CD14-positive monocyte (primary cell): ENCODE measurements at regions of chr2 and their contacts with region 1.

Region 1: GRCh38 chr2:197383823-197384222 is 51.0 kb downstream of the SF3B1 start:
- DNase-seq: no peak
- H3K4me3 ChIP-seq: no peak overlapping the region
- H3K4me3 Mint-ChIP-seq: no peak overlapping the region
- H3K27ac ChIP-seq: no peak overlapping the region
- H3K27ac Mint-ChIP-seq: no peak overlapping the region
- H3K4me1 ChIP-seq: no peaks in the 10 kb centered on the region
- H3K4me1 Mint-ChIP-seq: no peaks in the 10 kb centered on the region
- H3K27me3 ChIP-seq: no peaks in the 10 kb centered on the region
- H3K27me3 Mint-ChIP-seq: peaks cover 0 to 3% (median 0%) of the 10 kb centered on the region in 3 donors
- CTCF ChIP-seq: no peak

Region 2: GRCh38 chr2:196750982-196751635 is 632.7 kb before region 1 on chr2:
- intact Hi-C with region 1: loop called in 1 of 2 experiments (anchors 10 kb)
- DNase-seq: peak; percentile 42 to 60 (median 57)
- H3K4me3 ChIP-seq: peak overlapping the region in 1 of 3 experiments; percentile 1
- H3K4me3 Mint-ChIP-seq: no peak overlapping the region
- H3K27ac ChIP-seq: no peak overlapping the region
- H3K27ac Mint-ChIP-seq: peak overlapping the region in 1 of 7 donors; percentile 20
- H3K4me1 ChIP-seq: peaks cover 9 to 12% of the 10 kb centered on the region in 2 donors
- H3K4me1 Mint-ChIP-seq: peaks cover 19% of the 10 kb centered on the region
- H3K27me3 ChIP-seq: no peaks in the 10 kb centered on the region
- H3K27me3 Mint-ChIP-seq: peaks cover 0 to 3% (median 1%) of the 10 kb centered on the region in 3 donors
- CTCF ChIP-seq: peak; percentile 84

Region 3: DNA sequence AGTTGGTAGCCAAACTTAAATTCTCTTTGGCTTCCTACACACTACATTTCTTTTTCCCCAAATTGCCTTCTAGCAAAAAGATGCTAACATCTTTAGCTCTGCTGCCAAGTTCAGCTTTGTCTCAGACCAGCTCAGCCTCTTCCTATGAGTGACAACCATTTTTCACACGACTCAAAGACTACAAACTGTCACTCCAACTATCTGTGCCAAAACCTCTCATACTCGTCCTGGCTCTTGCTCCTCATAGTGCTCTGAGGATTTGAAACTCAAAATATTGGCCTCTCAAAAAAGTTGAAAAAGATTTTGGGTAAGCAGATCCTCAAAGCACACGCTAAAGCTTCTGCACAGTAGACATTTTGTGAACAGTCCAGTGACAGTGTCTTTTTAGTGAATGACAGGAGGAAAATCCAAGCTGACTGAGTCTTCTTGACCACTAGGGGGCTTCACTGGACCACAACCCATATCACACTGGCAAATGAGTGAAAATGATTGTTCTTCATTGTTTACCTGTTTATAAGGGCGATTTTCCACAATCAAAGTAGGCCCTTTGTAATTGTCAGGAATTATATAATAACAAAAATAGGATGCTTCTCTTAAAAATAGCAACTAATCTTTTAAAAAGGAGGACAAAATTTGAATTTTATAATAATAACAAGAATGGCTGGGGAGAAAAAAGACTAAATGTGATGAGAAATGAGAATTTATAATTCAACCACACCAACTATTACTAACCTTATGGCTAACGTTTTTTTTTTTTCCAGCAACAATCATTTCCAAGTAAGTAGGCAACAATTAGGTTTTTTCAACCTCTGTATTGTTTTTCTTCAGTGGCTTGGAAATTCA is 371.8 kb before region 1 on chr2:
- intact Hi-C with region 1: loop called (anchors 10 kb)
- DNase-seq: peak; percentile 9 to 38 (median 34)
- H3K4me3 ChIP-seq: no peak overlapping the region
- H3K4me3 Mint-ChIP-seq: no peak overlapping the region
- H3K27ac ChIP-seq: no peak overlapping the region
- H3K27ac Mint-ChIP-seq: peak overlapping the region in 1 of 7 donors; percentile 15
- H3K4me1 ChIP-seq: no peaks in the 10 kb centered on the region
- H3K4me1 Mint-ChIP-seq: no peaks in the 10 kb centered on the region
- H3K27me3 ChIP-seq: no peaks in the 10 kb centered on the region
- H3K27me3 Mint-ChIP-seq: no peaks in the 10 kb centered on the region
- CTCF ChIP-seq: peak; percentile 77

Region 4: GRCh38 chr2:197075759-197076337 is 308.0 kb before region 1 on chr2:
- intact Hi-C with region 1: loop called in 1 of 2 experiments (anchors 10 kb)
- DNase-seq: peak in 2 of 3 donors; percentile 20 to 23
- H3K4me3 ChIP-seq: no peak overlapping the region
- H3K4me3 Mint-ChIP-seq: no peak overlapping the region
- H3K27ac ChIP-seq: no peak overlapping the region
- H3K27ac Mint-ChIP-seq: peak overlapping the region in 1 of 7 donors; percentile 20
- H3K4me1 ChIP-seq: peaks cover 4 to 7% of the 10 kb centered on the region in 2 donors
- H3K4me1 Mint-ChIP-seq: peaks cover 8% of the 10 kb centered on the region
- H3K27me3 ChIP-seq: no peaks in the 10 kb centered on the region
- H3K27me3 Mint-ChIP-seq: no peaks in the 10 kb centered on the region
- CTCF ChIP-seq: peak; percentile 68

Region 5: DNA sequence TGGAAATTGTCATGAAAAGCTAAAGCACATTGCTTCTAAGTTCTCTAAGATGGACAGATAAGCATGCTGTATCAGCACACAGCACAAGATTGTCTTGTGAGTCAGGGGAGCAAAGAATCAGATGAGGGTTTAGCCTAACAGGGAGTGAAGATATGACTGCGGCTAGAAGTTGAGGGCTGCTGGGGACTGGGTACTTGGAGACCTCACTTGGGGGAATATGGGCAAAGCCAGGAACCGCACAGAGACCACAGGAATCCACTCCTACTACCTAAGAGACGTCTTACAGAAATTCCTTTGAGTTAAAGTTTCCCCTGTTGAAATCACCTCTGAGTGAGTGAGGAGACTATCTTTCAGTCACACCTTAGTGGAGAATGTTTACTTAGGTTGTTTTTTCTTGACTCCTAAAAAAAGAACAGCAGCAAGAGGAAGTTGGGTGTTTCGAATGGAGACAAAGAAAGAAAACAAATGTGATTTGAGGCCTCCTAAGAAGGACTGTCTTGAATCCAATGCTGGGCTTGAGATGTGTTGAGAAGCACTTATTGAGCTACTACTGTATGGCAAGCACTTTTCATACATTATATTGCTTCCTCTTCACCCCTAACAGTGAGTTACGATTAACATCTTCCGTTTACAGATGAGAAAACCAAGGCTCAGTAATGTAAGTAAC is 173.9 kb before region 1 on chr2:
- intact Hi-C with region 1: no loop called
- DNase-seq: no peak
- H3K4me3 ChIP-seq: peak overlapping the region in 1 of 3 experiments; percentile 9
- H3K4me3 Mint-ChIP-seq: peak overlapping the region in 1 of 2 donors; percentile 9
- H3K27ac ChIP-seq: peak overlapping the region; percentile 45 to 75
- H3K27ac Mint-ChIP-seq: peak overlapping the region; percentile 30 to 92 (median 80)
- H3K4me1 ChIP-seq: peaks cover 92 to 98% of the 10 kb centered on the region in 2 donors
- H3K4me1 Mint-ChIP-seq: peaks cover 97% of the 10 kb centered on the region
- H3K27me3 ChIP-seq: no peaks in the 10 kb centered on the region
- H3K27me3 Mint-ChIP-seq: no peaks in the 10 kb centered on the region
- CTCF ChIP-seq: no peak

Region 6: DNA sequence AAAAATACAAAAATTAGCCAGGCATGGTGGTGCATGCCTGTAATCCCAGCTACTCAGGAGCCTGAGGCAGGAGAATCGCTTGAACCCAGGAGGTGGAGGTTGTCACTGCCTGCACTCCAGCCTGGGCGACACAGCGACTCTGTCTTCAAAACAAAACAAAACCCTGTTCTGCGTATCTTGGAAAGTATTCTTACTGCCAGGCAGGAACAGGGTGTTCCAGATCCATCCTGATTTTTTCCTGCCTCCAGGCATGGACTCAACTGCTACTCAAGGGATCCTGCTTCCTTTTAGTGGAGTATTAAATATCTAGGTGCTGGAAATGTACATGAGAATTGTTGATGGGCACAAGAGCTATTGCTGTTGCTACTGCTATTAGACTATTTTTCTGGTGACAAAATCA is 103.6 kb after region 1 on chr2:
- intact Hi-C with region 1: no loop called
- DNase-seq: no peak
- H3K4me3 ChIP-seq: no peak overlapping the region
- H3K4me3 Mint-ChIP-seq: no peak overlapping the region
- H3K27ac ChIP-seq: no peak overlapping the region
- H3K27ac Mint-ChIP-seq: peak overlapping the region in 2 of 7 donors; percentile 15 to 48
- H3K4me1 ChIP-seq: no peaks in the 10 kb centered on the region
- H3K4me1 Mint-ChIP-seq: no peaks in the 10 kb centered on the region
- H3K27me3 ChIP-seq: no peaks in the 10 kb centered on the region
- H3K27me3 Mint-ChIP-seq: no peaks in the 10 kb centered on the region
- CTCF ChIP-seq: no peak

Region 7: GRCh38 chr2:197538412-197538811 is 154.6 kb after region 1 on chr2:
- intact Hi-C with region 1: no loop called
- DNase-seq: no peak
- H3K4me3 ChIP-seq: no peak overlapping the region
- H3K4me3 Mint-ChIP-seq: no peak overlapping the region
- H3K27ac ChIP-seq: no peak overlapping the region
- H3K27ac Mint-ChIP-seq: no peak overlapping the region
- H3K4me1 ChIP-seq: no peaks in the 10 kb centered on the region
- H3K4me1 Mint-ChIP-seq: peaks cover 2% of the 10 kb centered on the region
- H3K27me3 ChIP-seq: no peaks in the 10 kb centered on the region
- H3K27me3 Mint-ChIP-seq: peaks cover 0 to 1% (median 0%) of the 10 kb centered on the region in 3 donors
- CTCF ChIP-seq: no peak